Adrenal gland (tissue), 19 donors: ENCODE measurements at regions of chr12 and their contacts with region 1.

Region 1: GRCh38 chr12:100672075-100672592 is 98.7 kb downstream of the GAS2L3 start:
- DNase-seq: peak in 3 of 7 donors; percentile 25 to 35 (median 31)
- H3K4me3 ChIP-seq: no peak overlapping the region
- H3K27ac ChIP-seq: no peak overlapping the region
- H3K4me1 ChIP-seq: no peaks in the 10 kb centered on the region
- H3K27me3 ChIP-seq: no peaks in the 10 kb centered on the region
- CTCF ChIP-seq: peak in 5 of 6 experiments; percentile 22 to 48 (median 42)
- POLR2A ChIP-seq: no peak

Region 2: DNA sequence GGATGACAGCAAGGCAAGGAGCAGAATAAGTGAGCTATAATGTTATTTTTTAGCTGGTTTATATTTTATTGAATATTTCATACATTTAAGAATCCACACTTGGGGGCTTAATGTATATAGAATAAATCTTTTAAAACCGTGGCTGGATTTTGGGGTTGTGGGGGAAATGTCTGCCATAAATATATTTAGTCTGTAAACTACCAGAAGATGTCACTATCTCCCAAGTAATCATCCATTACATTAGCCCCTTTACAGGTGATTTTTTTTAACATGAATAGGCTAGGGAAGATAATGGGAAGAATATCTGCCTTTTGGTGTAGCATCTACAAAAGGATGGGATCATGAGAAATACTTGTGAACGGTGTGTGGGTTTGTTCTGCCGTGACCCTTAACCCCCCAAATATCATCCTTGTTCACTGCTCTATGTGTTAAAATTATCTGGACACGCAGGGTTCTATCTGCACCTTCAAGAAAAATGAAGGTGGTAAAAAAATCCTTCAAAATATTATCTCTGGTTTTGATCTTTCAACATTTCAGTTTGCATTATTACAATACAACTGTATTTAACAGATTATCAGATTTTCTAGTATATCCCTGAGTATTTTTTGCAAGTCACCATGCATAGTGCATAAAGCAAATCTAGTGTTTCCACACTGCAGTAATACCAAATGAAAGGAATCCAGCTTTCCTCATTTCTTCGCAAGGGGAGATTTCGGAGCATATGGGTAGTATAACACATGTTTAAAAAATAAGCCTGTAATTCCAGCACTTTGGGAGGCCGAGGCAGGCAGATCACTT is 323.3 kb before region 1 on chr12:
- intact Hi-C with region 1: loop called in 1 of 2 experiments (anchors 5 kb)
- DNase-seq: no peak
- H3K4me3 ChIP-seq: no peak overlapping the region
- H3K27ac ChIP-seq: no peak overlapping the region
- H3K4me1 ChIP-seq: no peaks in the 10 kb centered on the region
- H3K27me3 ChIP-seq: no peaks in the 10 kb centered on the region
- CTCF ChIP-seq: peak in 5 of 6 experiments; percentile 48 to 67 (median 60)
- POLR2A ChIP-seq: no peak

Region 3: DNA sequence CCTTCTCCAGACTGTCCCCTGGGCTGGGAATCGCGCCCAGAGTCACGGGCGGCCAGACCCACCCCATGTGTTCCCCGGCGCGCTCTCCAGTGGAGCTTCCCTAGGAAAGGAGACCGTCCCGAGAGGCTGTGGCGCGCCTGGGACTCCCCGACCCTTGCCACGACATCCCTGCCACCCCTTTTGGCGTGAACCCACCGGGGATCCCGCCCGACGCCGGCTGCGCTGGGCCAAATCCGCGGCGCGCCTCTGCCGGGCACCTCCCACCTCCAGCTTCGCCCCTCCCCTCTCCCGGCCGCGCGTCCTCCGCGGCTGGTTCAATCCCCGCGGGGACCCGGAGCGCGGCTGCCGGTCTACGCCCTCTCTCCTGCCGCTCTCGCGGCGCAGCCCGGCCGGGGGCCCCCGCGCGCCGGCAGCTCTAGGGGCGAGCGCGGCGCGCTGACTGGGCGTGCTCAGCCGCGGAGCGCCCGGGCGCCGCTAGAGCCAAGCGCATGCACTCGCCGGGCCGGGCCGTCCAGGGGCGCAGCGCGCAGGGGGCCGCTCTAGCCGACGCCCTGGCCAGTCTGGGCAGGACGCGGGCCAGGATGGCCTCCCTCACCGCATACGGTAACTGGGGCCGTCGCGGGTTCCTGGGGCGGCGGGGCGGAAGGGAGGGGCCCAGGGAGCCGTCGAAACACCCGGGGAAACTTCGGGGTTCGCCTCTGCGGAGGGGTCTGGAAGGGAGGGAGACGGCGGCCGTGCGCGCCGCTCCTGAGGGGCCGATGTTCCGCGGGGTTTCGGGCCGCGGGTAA is 45.0 kb after region 1 on chr12:
- intact Hi-C with region 1: no loop called
- DNase-seq: no peak
- H3K4me3 ChIP-seq: peak overlapping the region in 1 of 4 donors; percentile 56
- H3K27ac ChIP-seq: no peak overlapping the region
- H3K4me1 ChIP-seq: peaks cover 0 to 4% of the 10 kb centered on the region in 2 donors
- H3K27me3 ChIP-seq: peaks cover 38% of the 10 kb centered on the region
- CTCF ChIP-seq: no peak
- POLR2A ChIP-seq: no peak

Region 4: GRCh38 chr12:100733817-100734593 is 61.9 kb after region 1 on chr12:
- intact Hi-C with region 1: loop called in 1 of 2 experiments (anchors 5 kb)
- DNase-seq: no peak
- H3K4me3 ChIP-seq: no peak overlapping the region
- H3K27ac ChIP-seq: no peak overlapping the region
- H3K4me1 ChIP-seq: no peaks in the 10 kb centered on the region
- H3K27me3 ChIP-seq: peaks cover 6% of the 10 kb centered on the region
- CTCF ChIP-seq: peak; percentile 32 to 67 (median 56)
- POLR2A ChIP-seq: no peak